MCF 10A (cell line): ENCODE measurements at regions of chr16 and their contacts with region 1.

Region 1: DNA sequence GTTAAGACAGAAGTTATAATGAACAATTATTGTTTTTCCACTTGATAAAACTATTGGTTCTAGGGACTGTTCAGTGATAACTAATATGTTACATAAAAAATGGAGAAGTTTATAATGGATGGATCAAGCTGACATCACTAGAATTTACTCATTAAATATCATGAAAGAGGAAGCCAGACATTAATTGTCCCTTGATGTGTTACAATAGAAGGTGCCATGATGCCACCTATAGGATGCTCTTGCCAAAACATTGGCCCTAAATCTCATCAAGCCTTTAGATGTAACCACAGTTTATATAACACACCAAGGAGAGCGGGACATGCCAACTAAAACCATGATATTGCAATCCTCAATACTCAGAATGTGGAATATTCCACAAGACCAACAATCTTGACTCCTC is 147.9 kb upstream of the MON1B start:
- DNase-seq: peak; percentile 54
- H3K4me3 Mint-ChIP-seq: no peak overlapping the region
- H3K27ac Mint-ChIP-seq: no peak overlapping the region
- H3K4me1 Mint-ChIP-seq: no peaks in the 10 kb centered on the region
- H3K27me3 Mint-ChIP-seq: no peaks in the 10 kb centered on the region
- CTCF ChIP-seq: peak; percentile 36

Region 2: GRCh38 chr16:75789237-75789636 is 1253.8 kb before region 1 on chr16:
- CTCF ChIA-PET with region 1: no interaction called
- POLR2A ChIA-PET with region 1: no interaction called
- intact Hi-C with region 1: loop called (anchors 2 kb)
- DNase-seq: peak; percentile 69
- H3K4me3 Mint-ChIP-seq: no peak overlapping the region
- H3K27ac Mint-ChIP-seq: no peak overlapping the region
- H3K4me1 Mint-ChIP-seq: no peaks in the 10 kb centered on the region
- H3K27me3 Mint-ChIP-seq: no peaks in the 10 kb centered on the region
- CTCF ChIP-seq: peak; percentile 67

Region 3: GRCh38 chr16:75801307-75801706 is 1241.8 kb before region 1 on chr16:
- CTCF ChIA-PET with region 1: interaction called, 4 read pairs
- POLR2A ChIA-PET with region 1: no interaction called
- intact Hi-C with region 1: loop called (anchors 5 kb)
- DNase-seq: peak; percentile 22
- H3K4me3 Mint-ChIP-seq: no peak overlapping the region
- H3K27ac Mint-ChIP-seq: no peak overlapping the region
- H3K4me1 Mint-ChIP-seq: peaks cover 5% of the 10 kb centered on the region
- H3K27me3 Mint-ChIP-seq: no peaks in the 10 kb centered on the region
- CTCF ChIP-seq: peak; percentile 48

Region 4: DNA sequence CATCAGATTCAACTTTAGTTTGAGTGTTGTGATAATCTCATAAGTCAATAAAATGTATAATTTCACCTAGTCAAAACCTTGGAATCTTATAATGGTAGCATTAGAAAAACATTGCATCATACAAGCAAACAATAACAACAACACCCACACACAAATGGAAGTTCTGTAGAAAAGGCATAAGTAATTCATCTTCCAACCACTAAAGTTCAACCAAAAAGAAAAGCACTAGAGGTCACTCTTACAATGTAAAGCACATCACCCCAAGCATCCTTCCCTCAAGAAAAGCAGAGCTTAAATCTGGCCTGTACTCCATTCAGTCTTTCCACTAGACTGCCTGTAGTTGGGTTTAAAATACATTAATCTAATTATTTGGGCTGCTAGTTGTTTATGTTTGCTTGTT is 764.1 kb before region 1 on chr16:
- CTCF ChIA-PET with region 1: interaction called, 14 read pairs
- POLR2A ChIA-PET with region 1: no interaction called
- intact Hi-C with region 1: loop called (anchors 1 kb)
- DNase-seq: peak; percentile 53
- H3K4me3 Mint-ChIP-seq: no peak overlapping the region
- H3K27ac Mint-ChIP-seq: no peak overlapping the region
- H3K4me1 Mint-ChIP-seq: peaks cover 9% of the 10 kb centered on the region
- H3K27me3 Mint-ChIP-seq: peaks cover 15% of the 10 kb centered on the region
- CTCF ChIP-seq: peak; percentile 47

Region 5: GRCh38 chr16:76668207-76668725 is 374.8 kb before region 1 on chr16:
- CTCF ChIA-PET with region 1: interaction called, 19 read pairs
- POLR2A ChIA-PET with region 1: no interaction called
- intact Hi-C with region 1: loop called (anchors 5 kb)
- DNase-seq: no peak
- H3K4me3 Mint-ChIP-seq: no peak overlapping the region
- H3K27ac Mint-ChIP-seq: no peak overlapping the region
- H3K4me1 Mint-ChIP-seq: no peaks in the 10 kb centered on the region
- H3K27me3 Mint-ChIP-seq: no peaks in the 10 kb centered on the region
- CTCF ChIP-seq: no peak

Region 6: DNA sequence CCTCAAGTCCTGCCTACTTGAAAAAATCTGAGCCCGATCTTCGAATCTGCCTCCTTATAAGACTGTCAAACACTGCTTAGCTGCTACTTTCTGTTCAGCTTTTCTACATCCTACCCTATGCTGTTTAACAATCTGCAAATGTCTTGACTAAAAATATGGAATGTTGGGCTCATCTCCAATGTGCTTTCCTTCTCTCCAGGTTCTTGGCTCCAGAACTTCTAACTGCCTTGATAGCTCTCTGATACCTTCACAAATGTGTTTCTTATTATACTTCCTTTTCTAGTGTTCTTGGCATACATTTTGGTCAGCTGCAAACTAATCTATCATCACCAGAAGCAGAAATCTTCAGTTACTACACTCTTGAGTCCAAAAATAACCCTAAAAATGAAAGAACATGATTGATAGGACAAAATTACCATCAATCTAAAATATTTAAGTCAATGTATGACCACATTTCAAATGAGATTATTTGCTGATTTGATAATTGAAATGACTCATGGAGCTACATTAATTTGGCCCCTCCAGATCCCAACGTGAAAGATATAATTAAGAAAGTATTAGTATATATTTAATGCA is 224.4 kb before region 1 on chr16:
- CTCF ChIA-PET with region 1: interaction called, 4 read pairs
- POLR2A ChIA-PET with region 1: no interaction called
- intact Hi-C with region 1: loop called (anchors 2 kb)
- DNase-seq: no peak
- H3K4me3 Mint-ChIP-seq: no peak overlapping the region
- H3K27ac Mint-ChIP-seq: no peak overlapping the region
- H3K4me1 Mint-ChIP-seq: peaks cover 5% of the 10 kb centered on the region
- H3K27me3 Mint-ChIP-seq: no peaks in the 10 kb centered on the region
- CTCF ChIP-seq: no peak

Region 7: DNA sequence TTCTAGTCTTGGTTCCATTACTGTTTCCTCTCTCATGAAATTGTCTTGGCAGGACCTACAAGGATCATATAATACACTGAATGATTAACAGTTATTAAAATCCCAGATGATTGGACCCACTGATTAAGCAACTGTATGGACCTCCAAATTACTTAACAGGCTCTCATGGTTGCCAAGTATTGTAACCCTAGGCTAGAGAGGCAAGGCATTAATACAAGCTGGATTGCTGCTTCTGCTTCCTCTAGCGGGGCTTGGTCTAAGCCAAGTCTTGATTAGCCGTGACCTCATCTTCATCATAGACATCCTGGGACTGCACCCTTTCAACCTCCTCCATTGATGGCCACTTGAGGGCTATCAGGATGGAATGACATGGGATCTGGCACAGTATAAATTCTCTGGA is 203.1 kb after region 1 on chr16:
- CTCF ChIA-PET with region 1: no interaction called
- POLR2A ChIA-PET with region 1: no interaction called
- intact Hi-C with region 1: no loop called
- DNase-seq: no peak
- H3K4me3 Mint-ChIP-seq: no peak overlapping the region
- H3K27ac Mint-ChIP-seq: no peak overlapping the region
- H3K4me1 Mint-ChIP-seq: no peaks in the 10 kb centered on the region
- H3K27me3 Mint-ChIP-seq: no peaks in the 10 kb centered on the region
- CTCF ChIP-seq: no peak